ENCODE measurements at regions of chr13 and their contacts with region 1.

Region 1: DNA sequence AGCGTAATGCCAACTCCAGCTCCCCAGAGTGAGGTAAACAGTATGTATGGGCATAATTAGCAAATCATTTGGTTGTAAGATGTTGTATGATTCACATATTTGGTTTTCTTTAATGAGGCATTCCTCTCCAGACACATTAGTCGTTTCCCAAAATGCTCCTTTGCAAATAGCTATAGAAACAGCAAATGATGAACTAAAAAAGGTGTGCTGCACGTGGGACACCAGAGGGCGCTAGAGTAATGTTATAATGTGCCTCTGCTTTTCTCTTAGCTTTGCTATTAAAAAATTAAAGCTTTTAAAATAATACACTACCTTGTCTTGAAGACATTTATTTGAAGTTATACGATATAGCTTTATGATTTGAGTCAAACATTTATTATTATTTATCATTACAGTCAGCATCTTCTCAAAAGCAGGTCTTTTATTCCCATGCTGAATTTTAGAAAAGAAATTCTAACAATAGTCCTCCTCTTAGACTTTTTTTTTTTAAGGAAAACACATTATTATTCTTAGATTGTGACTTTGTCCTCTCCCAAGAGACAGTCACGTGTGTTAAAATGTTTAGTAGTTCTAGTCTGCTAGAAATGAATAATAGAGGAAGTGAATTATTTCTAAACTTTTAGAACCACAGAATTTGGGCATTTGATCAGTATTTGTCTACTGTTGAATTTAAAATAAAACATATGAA is 121.6 kb upstream of the FRY start:
- DNase-seq: peak; percentile 68
- ATAC-seq: no peak
- H3K4me3 Mint-ChIP-seq: no peak overlapping the region
- H3K27ac Mint-ChIP-seq: no peak overlapping the region
- H3K4me1 Mint-ChIP-seq: peaks cover 4% of the 10 kb centered on the region
- H3K27me3 Mint-ChIP-seq: peaks cover 30% of the 10 kb centered on the region

Region 2: GRCh38 chr13:31722673-31723072 is 187.3 kb before region 1 on chr13:
- CTCF ChIA-PET with region 1: no interaction called
- POLR2A ChIA-PET with region 1: no interaction called
- DNase-seq: no peak
- ATAC-seq: no peak
- H3K4me3 Mint-ChIP-seq: no peak overlapping the region
- H3K27ac Mint-ChIP-seq: no peak overlapping the region
- H3K4me1 Mint-ChIP-seq: no peaks in the 10 kb centered on the region
- H3K27me3 Mint-ChIP-seq: no peaks in the 10 kb centered on the region

Region 3: DNA sequence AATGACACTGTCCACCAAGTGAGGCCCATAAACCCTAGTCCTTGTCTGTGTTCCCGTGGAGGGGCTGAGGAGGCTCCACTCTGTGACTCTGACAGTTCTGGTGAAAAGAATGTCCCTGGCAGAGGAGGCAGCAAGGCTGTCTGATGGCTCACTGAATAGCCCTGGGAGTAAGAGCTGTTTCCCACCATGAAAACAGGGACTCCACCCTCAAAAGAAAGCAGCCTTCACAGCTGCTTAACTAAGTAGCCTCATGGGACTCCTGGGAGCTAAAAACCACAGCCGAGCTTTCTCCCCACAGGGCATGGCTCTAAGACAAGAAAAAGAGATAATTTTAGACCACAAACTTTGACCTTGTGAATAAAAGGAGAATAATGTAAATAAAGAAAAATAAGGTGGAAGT is 13.6 kb before region 1 on chr13:
- CTCF ChIA-PET with region 1: interaction called, 23 read pairs
- POLR2A ChIA-PET with region 1: no interaction called
- DNase-seq: no peak
- ATAC-seq: no peak
- H3K4me3 Mint-ChIP-seq: no peak overlapping the region
- H3K27ac Mint-ChIP-seq: no peak overlapping the region
- H3K4me1 Mint-ChIP-seq: peaks cover 8% of the 10 kb centered on the region
- H3K27me3 Mint-ChIP-seq: peaks cover 18% of the 10 kb centered on the region

Region 4: DNA sequence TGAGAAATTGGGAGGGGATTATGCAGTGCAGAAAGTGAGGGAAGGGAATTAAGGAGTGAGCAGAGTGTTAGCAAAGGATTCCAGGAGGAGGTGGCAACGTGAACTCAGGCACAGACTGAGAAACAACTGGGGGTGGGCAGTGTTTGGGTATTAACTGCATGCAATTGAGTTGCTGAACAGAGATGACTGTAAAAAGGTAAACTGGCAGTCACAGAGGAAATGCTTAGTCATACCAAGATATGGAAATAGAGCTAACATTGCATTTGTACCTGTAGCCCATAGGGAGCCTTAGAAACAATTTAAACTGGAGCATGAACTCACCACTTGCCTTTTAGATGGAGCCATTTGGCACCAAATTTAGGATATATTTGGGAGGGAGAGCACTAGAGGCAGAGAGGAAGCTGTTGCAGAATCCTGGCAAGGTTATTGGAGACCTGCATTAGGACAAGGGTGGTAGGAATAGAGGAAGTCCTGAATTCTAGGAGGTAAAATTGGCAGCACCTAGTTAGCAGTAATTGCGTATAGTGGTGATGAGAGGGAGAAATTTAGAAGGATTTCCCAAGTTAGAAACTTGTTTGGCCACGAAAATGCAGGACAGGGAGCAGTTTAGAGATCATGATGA is 21.0 kb after region 1 on chr13:
- CTCF ChIA-PET with region 1: interaction called, 12 read pairs
- POLR2A ChIA-PET with region 1: no interaction called
- DNase-seq: no peak
- ATAC-seq: peak; percentile 76
- H3K4me3 Mint-ChIP-seq: no peak overlapping the region
- H3K27ac Mint-ChIP-seq: no peak overlapping the region
- H3K4me1 Mint-ChIP-seq: peaks cover 2% of the 10 kb centered on the region
- H3K27me3 Mint-ChIP-seq: peaks cover 3% of the 10 kb centered on the region

Region 5: DNA sequence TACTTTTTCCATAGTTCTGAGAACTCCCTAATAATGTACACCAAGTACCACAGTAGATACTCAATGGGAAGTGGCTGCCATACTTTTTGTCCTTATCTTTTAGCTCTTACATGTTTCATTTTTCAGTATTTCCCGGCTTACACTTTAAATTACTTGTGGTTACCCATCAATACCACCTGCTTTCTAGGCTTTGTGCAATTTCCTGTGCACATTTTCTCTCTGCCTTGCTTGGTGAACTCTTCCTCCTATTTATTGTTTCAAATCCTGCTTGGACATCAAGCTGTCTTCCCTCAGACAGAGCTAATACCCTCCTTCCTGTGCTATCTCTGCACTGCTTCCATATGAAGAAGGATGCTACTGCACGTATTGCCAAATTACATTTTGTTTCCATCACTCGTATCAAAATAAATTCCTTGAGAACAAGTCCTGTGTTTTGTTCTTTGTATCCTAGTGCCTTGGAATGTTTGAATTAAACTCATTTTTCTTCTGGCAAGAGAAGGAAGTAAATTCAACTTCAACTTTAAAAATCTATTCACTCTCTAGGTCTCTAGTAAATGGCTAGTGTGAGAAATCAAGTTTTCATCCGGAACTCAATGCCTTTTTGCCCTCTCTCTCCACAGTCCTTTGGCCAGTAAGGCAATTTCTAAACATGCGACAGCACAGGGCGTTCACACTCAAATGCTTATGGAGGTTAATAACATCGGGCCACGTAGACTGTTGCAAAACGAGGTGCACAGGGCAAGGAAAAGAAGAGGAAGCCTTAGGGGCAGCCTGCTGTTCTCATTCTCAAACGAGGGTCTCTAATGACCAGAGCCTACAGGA is 399.5 kb after region 1 on chr13:
- CTCF ChIA-PET with region 1: interaction called, 13 read pairs
- POLR2A ChIA-PET with region 1: interaction called, 3 read pairs
- DNase-seq: no peak
- ATAC-seq: peak; percentile 43
- H3K4me3 Mint-ChIP-seq: no peak overlapping the region
- H3K27ac Mint-ChIP-seq: peak overlapping the region; percentile 28
- H3K4me1 Mint-ChIP-seq: peaks cover 31% of the 10 kb centered on the region
- H3K27me3 Mint-ChIP-seq: peaks cover 4% of the 10 kb centered on the region

Region 6: GRCh38 chr13:32504263-32504927 is 594.4 kb after region 1 on chr13:
- CTCF ChIA-PET with region 1: no interaction called
- POLR2A ChIA-PET with region 1: no interaction called
- DNase-seq: no peak
- ATAC-seq: no peak
- H3K4me3 Mint-ChIP-seq: no peak overlapping the region
- H3K27ac Mint-ChIP-seq: no peak overlapping the region
- H3K4me1 Mint-ChIP-seq: no peaks in the 10 kb centered on the region
- H3K27me3 Mint-ChIP-seq: no peaks in the 10 kb centered on the region

Region 7: DNA sequence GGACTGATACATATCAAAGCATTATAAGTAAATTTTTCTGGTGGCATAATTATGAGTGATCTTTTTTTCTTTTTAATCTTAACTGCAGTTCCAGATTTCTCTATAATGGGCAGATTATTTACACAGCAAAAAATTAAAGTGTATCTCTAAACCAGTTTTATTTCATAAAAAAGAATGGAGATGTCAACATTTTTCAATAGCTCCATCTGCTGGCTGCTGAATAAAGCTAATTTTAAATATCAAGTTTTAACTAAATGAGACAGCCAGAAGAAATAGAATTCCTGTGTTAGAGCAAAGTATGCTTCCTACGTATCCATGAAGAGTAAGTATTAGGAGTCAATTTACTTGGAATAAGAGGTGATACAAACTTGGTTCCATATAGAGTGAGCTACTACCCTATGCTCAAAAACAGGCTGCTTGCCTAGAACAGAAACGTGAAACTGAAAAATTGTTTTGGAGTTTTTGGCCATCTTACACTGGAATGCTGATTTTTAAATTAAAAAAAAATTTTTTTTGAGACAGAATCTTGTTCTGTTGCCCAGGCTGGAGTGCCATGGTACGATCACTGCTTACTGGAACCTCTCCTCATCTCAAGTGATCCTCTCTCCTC is 671.3 kb after region 1 on chr13:
- CTCF ChIA-PET with region 1: interaction called, 17 read pairs
- POLR2A ChIA-PET with region 1: no interaction called
- DNase-seq: no peak
- ATAC-seq: no peak
- H3K4me3 Mint-ChIP-seq: no peak overlapping the region
- H3K27ac Mint-ChIP-seq: no peak overlapping the region
- H3K4me1 Mint-ChIP-seq: peaks cover 9% of the 10 kb centered on the region
- H3K27me3 Mint-ChIP-seq: peaks cover 6% of the 10 kb centered on the region